GM12878 (cell line): ENCODE measurements at regions of chr14 and their contacts with region 1.

Region 1: DNA sequence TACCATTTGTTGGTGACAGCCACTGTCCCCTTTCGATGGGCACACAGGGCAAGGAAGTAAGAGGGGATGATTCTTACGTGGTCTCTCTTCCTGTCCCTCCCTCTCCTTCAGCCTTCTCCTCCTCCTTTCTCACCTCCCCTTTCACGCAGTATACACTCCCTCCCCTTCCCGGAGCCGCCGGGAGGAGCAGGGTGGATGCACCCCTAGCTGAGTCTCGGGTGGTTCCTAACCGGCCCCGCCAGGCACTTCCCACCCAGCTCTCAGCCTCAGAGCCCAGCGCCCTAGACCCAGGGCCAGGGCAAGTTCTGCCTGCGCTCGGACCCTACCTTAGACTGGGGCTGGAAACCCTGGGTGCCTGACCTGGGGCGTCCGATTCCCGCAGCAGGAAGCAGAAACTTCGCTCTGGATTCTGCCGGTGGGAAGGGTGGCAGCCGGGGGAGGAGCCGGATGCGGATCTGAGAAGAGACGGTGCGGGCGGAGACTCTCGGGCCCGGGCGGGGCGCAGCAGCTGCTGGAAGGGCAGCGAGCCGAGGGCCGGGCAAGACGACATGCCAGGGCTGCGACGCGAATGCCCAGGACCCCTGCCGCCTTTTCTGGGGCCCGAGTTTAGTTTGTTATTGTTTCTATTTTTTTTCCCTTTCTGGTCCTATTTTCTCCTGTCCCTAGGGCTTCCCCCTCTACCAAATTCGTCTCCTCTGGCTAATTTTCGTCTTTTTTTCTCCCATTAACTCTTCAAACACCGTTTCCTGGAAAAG is at the start of gene TEP1:
- DNase-seq: no peak
- ATAC-seq: peak; percentile 94
- H3K4me3 ChIP-seq: peak within 1 kb of the TSS; percentile 99
- H3K27ac ChIP-seq: peak within 1 kb of the TSS; percentile 94
- H3K4me1 ChIP-seq: peaks cover 4% of the 10 kb centered on the region
- H3K27me3 ChIP-seq: no peaks in the 10 kb centered on the region
- CTCF ChIP-seq: no peak
- EP300 ChIP-seq: no peak
- POLR2A ChIP-seq: peak; percentile 71
- RAD21 ChIP-seq: no peak
- polyA plus RNA-seq, gene TEP1: 3.3 to 6.4 TPM

Region 2: DNA sequence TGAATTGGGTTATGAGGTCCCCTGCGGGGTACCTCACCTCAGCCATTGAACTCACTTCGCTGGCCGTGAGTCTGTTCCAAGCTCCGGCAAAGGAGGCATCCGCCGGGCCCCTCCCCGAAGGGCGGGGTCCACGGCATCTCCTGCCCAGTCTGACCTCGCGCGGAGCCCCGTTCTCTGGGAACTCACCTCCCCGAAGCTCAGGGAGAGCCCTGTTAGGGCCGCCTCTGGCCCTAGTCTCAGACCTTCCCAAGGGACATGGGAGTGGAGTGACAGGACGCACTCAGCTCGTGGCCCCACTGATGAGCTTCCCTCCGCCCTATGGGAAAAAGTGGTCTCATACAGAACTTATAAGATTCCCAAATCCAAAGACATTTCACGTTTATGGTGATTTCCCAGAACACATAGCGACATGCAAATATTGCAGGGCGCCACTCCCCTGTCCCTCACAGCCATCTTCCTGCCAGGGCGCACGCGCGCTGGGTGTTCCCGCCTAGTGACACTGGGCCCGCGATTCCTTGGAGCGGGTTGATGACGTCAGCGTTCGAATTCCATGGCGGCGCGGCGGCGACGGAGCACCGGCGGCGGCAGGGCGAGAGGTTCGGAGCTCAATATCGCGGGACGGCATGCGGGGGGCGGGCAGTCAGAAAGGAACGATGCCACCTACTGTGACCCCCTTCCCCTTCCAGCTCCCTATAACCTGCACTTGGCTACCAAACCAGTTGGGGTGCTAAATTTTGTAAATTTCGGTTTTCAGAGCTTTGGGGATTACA is 69.9 kb before region 1 on chr14 and contains the start of gene PARP2:
- CTCF ChIA-PET with region 1: interaction called, 9 read pairs
- POLR2A ChIA-PET with region 1: interaction called, 29 read pairs
- RAD21 ChIA-PET with region 1: interaction called, 18 read pairs
- SMC1A ChIA-PET with region 1: interaction called, 18 read pairs
- in situ Hi-C with region 1: no loop called
- intact Hi-C with region 1: loop called (anchors 5 kb)
- DNase-seq: peak; percentile 99
- ATAC-seq: peak; percentile 96
- H3K4me3 ChIP-seq: peak within 1 kb of the TSS; percentile 81
- H3K27ac ChIP-seq: peak within 1 kb of the TSS; percentile 89
- H3K4me1 ChIP-seq: no peaks in the 10 kb centered on the region
- H3K27me3 ChIP-seq: no peaks in the 10 kb centered on the region
- CTCF ChIP-seq: no peak
- EP300 ChIP-seq: no peak
- POLR2A ChIP-seq: peak; percentile 97
- RAD21 ChIP-seq: no peak
- polyA plus RNA-seq, gene PARP2: 30.4 to 38.0 TPM

Region 3: GRCh38 chr14:20440882-20441281 is 27.7 kb after region 1 on chr14:
- CTCF ChIA-PET with region 1: interaction called, 10 read pairs
- POLR2A ChIA-PET with region 1: no interaction called
- RAD21 ChIA-PET with region 1: interaction called, 3 read pairs
- SMC1A ChIA-PET with region 1: interaction called, 3 read pairs
- in situ Hi-C with region 1: no loop called
- intact Hi-C with region 1: no loop called
- DNase-seq: no peak
- ATAC-seq: peak; percentile 20; the same call in 2 of the 3 replicates
- H3K4me3 ChIP-seq: no peak overlapping the region
- H3K27ac ChIP-seq: no peak overlapping the region
- H3K4me1 ChIP-seq: no peaks in the 10 kb centered on the region
- H3K27me3 ChIP-seq: no peaks in the 10 kb centered on the region
- CTCF ChIP-seq: no peak
- EP300 ChIP-seq: no peak
- POLR2A ChIP-seq: no peak
- RAD21 ChIP-seq: no peak

Region 4: DNA sequence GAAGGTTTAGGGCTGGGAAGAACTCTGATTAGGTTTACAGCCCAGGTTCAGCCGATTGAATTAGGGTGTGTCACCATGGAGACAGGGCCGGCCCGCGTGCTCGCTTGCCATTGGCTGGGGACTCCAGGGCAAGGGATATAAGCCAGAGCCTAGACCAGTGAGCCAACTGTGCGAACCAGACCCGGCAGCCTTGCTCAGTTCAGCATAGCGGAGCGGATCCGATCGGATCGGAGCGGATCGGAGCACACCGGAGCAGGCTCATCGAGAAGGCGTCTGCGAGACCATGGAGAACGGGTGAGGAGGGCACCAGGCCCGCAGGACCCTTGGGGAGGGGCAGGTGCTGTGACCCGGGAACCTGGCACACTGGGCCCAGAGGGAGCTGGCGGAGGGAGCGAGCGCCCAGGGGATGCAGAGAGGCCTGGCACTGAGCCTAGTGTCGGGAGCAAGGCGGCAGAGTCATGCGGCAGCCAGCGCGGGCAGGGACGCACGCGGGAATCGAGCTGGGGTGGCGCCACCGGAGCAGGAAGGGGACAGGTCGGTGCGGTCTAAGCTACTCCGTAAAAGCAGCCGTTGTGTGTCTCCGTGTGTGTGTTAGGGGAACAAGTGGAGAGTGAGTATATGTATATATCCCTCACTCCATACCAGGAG is 56.1 kb after region 1 on chr14 and contains the start of gene PNP:
- CTCF ChIA-PET with region 1: interaction called, 12 read pairs
- POLR2A ChIA-PET with region 1: interaction called, 4 read pairs
- RAD21 ChIA-PET with region 1: interaction called, 9 read pairs
- SMC1A ChIA-PET with region 1: interaction called, 6 read pairs
- in situ Hi-C with region 1: no loop called
- intact Hi-C with region 1: no loop called
- DNase-seq: peak; percentile 65
- ATAC-seq: peak; percentile 97
- H3K4me3 ChIP-seq: peak within 1 kb of the TSS; percentile 85
- H3K27ac ChIP-seq: peak within 1 kb of the TSS; percentile 69
- H3K4me1 ChIP-seq: peaks cover 7% of the 10 kb centered on the region; the same call in 1 of the 2 replicates
- H3K27me3 ChIP-seq: no peaks in the 10 kb centered on the region
- CTCF ChIP-seq: 0 out of 6 replicates have a peak, but pooled peaks of 1 of the 3 experiments have one; percentile 7
- EP300 ChIP-seq: no peak
- POLR2A ChIP-seq: peak; percentile 100
- RAD21 ChIP-seq: no peak
- polyA plus RNA-seq, gene PNP: 103 to 123 TPM

Region 5: DNA sequence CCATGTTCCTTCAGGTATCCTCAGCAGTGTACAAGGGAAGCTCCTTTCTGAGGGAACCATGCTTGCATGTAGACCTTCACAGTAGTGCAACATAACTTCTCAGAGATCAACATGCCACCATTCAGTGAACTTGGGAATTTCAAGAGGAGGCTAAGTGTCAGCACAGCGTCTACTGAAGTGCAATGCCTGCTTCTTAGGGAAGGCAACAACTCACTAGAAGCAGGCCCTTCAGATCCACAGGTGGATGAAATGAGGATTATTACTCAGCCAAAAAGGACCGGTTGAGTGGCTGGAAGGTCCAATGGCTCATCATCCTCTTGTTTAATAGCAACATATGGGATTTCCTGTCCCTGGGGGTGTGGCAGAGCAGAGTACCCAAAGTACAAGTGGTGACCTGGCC is 110.8 kb after region 1 on chr14:
- CTCF ChIA-PET with region 1: interaction called, 24 read pairs
- POLR2A ChIA-PET with region 1: no interaction called
- RAD21 ChIA-PET with region 1: interaction called, 9 read pairs
- SMC1A ChIA-PET with region 1: interaction called, 8 read pairs
- in situ Hi-C with region 1: no loop called
- intact Hi-C with region 1: no loop called
- DNase-seq: no peak
- ATAC-seq: no peak
- H3K4me3 ChIP-seq: no peak overlapping the region
- H3K27ac ChIP-seq: no peak overlapping the region
- H3K4me1 ChIP-seq: no peaks in the 10 kb centered on the region
- H3K27me3 ChIP-seq: 0 out of 4 replicates have a peak, but pooled peaks cover 0 to 3% of the 10 kb centered on the region in 2 experiments
- CTCF ChIP-seq: no peak
- EP300 ChIP-seq: no peak
- POLR2A ChIP-seq: no peak
- RAD21 ChIP-seq: no peak

Region 6: DNA sequence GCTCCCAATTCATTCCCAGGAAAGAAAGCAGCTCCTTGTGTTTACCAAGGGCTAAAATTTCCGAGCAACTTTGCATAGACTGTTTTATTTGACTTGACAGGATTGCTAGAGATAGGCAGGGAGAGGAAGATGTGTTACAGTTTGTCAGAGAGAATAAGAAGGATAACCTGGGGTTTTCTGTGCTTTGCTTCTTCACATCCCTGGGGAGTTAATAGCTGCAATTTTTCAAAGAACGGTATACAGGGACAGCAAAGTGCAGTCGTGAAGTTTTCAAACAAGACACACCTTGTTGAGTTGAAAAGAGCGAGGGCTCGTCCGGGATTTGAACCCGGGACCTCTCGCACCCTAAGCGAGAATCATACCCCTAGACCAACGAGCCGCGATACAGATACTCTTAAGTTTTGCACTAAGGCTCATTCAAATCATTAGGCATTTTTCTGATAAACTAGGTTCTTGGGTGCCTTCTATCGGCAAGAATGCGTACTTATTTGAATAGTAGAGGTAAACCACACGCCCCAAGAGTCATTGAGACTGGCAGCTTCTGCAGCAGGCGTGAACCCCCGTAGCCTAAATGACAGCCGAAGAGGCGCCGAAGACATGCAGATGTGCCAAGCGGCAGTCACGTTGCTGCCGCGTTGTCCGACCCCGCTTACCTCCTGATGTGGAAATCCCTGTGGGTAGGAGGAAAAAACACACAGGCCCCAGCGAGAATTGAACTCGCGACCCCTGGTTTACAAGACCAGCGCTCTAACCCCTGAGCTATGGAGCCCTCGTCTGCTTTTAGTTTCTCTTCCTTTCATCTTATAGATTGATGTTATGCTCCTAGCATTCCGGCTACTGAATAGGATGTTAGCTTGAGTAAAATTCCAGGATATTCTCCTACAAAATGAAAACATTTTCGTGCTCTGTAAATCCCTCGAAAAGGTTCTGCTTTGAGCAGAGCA is 200.1 kb after region 1 on chr14:
- CTCF ChIA-PET with region 1: interaction called, 86 read pairs
- POLR2A ChIA-PET with region 1: interaction called, 3 read pairs
- RAD21 ChIA-PET with region 1: interaction called, 36 read pairs
- SMC1A ChIA-PET with region 1: interaction called, 47 read pairs
- in situ Hi-C with region 1: loop called (anchors 5 kb)
- intact Hi-C with region 1: loop called (anchors 1 kb)
- DNase-seq: peak; percentile 98
- ATAC-seq: peak; percentile 76
- H3K4me3 ChIP-seq: peak overlapping the region; percentile 89
- H3K27ac ChIP-seq: peak overlapping the region; percentile 54; the same call in 1 of the 2 replicates
- H3K4me1 ChIP-seq: peaks cover 42% of the 10 kb centered on the region
- H3K27me3 ChIP-seq: no peaks in the 10 kb centered on the region
- CTCF ChIP-seq: peak; percentile 49 to 62 (median 56); a peak in 5 of 6 replicates
- EP300 ChIP-seq: no peak; a peak in 1 of 4 replicates
- POLR2A ChIP-seq: no peak
- RAD21 ChIP-seq: 0 out of 2 replicates have a peak, but pooled peaks have one; percentile 7